ENCODE measurements at regions of chr10 and their contacts with region 1.

Region 1: GRCh38 chr10:29998142-29998808 is 61.1 kb downstream of the JCAD start:
- DNase-seq: peak; percentile 69
- H3K4me3 Mint-ChIP-seq: no peak overlapping the region
- H3K27ac Mint-ChIP-seq: no peak overlapping the region
- H3K4me1 Mint-ChIP-seq: peaks cover 20% of the 10 kb centered on the region
- H3K27me3 Mint-ChIP-seq: peaks cover 33% of the 10 kb centered on the region

Region 2: GRCh38 chr10:29535012-29535777 is 463.1 kb before region 1 on chr10:
- intact Hi-C with region 1: no loop called
- DNase-seq: no peak
- H3K4me3 Mint-ChIP-seq: no peak overlapping the region
- H3K27ac Mint-ChIP-seq: no peak overlapping the region
- H3K4me1 Mint-ChIP-seq: no peaks in the 10 kb centered on the region
- H3K27me3 Mint-ChIP-seq: no peaks in the 10 kb centered on the region

Region 3: GRCh38 chr10:30027057-30028005 is 29.1 kb after region 1 on chr10:
- intact Hi-C with region 1: loop called (anchors 1 kb)
- DNase-seq: peak; percentile 93
- H3K4me3 Mint-ChIP-seq: peak overlapping the region; percentile 73
- H3K27ac Mint-ChIP-seq: peak overlapping the region; percentile 93
- H3K4me1 Mint-ChIP-seq: peaks cover 45% of the 10 kb centered on the region
- H3K27me3 Mint-ChIP-seq: peaks cover 22% of the 10 kb centered on the region

Region 4: GRCh38 chr10:30059209-30060107 is 61.2 kb after region 1 on chr10 and contains the start of gene JCAD:
- intact Hi-C with region 1: loop called (anchors 5 kb)
- DNase-seq: peak; percentile 48
- H3K4me3 Mint-ChIP-seq: peak within 1 kb of the TSS; percentile 69
- H3K27ac Mint-ChIP-seq: no peak within 1 kb of the TSS
- H3K4me1 Mint-ChIP-seq: peaks cover 12% of the 10 kb centered on the region
- H3K27me3 Mint-ChIP-seq: peaks cover 76% of the 10 kb centered on the region
- total RNA-seq, gene JCAD: 0.15 and 0.31 TPM in 2 replicates

Region 5: GRCh38 chr10:30359373-30360206 is 361.3 kb after region 1 on chr10:
- intact Hi-C with region 1: loop called (anchors 5 kb)
- DNase-seq: peak; percentile 48
- H3K4me3 Mint-ChIP-seq: no peak overlapping the region
- H3K27ac Mint-ChIP-seq: no peak overlapping the region
- H3K4me1 Mint-ChIP-seq: peaks cover 8% of the 10 kb centered on the region
- H3K27me3 Mint-ChIP-seq: peaks cover 13% of the 10 kb centered on the region

Region 6: DNA sequence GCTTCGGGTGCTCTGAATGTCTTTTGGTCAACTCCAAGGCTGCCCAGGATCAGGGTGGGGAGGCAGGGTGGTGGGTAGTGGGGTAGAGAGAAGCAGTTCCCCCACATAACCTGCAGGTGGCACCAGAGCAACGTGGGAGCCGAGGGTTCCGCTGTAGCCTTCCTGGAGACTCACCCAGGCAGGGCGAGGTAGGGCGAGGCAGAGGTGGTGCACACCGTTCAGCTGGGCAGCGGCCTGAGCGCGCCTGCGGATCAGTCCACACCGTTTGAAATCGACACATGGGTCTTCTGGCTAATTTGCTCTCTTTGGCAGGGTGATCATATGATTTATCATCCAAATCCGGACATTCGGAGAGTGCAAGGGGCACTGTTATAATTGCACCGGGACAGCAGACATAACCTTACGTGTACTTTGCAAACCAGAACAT is 394.3 kb after region 1 on chr10:
- intact Hi-C with region 1: loop called (anchors 2 kb)
- DNase-seq: peak; percentile 67
- H3K4me3 Mint-ChIP-seq: no peak overlapping the region
- H3K27ac Mint-ChIP-seq: no peak overlapping the region
- H3K4me1 Mint-ChIP-seq: peaks cover 15% of the 10 kb centered on the region
- H3K27me3 Mint-ChIP-seq: peaks cover 14% of the 10 kb centered on the region

Region 7: GRCh38 chr10:30591249-30591670 is 593.0 kb after region 1 on chr10:
- intact Hi-C with region 1: loop called (anchors 1 kb)
- DNase-seq: peak; percentile 31
- H3K4me3 Mint-ChIP-seq: no peak overlapping the region
- H3K27ac Mint-ChIP-seq: no peak overlapping the region
- H3K4me1 Mint-ChIP-seq: no peaks in the 10 kb centered on the region
- H3K27me3 Mint-ChIP-seq: peaks cover 15% of the 10 kb centered on the region

Measured in activated T-helper 1 cell treated with anti-CD3 and anti-CD28 coated beads, Interleukin-12 subunit alpha, Interleukin-12 subunit beta, Interleukin-2, Interleukin-4 antibody, amounts not matched to agents 30 ng/mL and 10 ng/mL and 1 ng/mL, durations not matched to agents 14 hours and 24 hours and 36 hours (primary cell).